Stomach (tissue), 19 donors: ENCODE measurements at regions of chrX and their contacts with region 1.

Region 1: GRCh38 chrX:1468250-1468772 is 15.6 kb upstream of the ASMTL start:
- DNase-seq: peak; percentile 40 to 50
- H3K4me3 ChIP-seq: no peak overlapping the region
- H3K27ac ChIP-seq: peak overlapping the region in 1 of 5 donors; percentile 62
- H3K4me1 ChIP-seq: peaks cover 0 to 32% (median 6%) of the 10 kb centered on the region in 4 donors
- H3K27me3 ChIP-seq: peaks cover 0 to 74% (median 13%) of the 10 kb centered on the region in 3 donors
- CTCF ChIP-seq: no peak
- EP300 ChIP-seq: no peak
- POLR2A ChIP-seq: no peak

Region 2: DNA sequence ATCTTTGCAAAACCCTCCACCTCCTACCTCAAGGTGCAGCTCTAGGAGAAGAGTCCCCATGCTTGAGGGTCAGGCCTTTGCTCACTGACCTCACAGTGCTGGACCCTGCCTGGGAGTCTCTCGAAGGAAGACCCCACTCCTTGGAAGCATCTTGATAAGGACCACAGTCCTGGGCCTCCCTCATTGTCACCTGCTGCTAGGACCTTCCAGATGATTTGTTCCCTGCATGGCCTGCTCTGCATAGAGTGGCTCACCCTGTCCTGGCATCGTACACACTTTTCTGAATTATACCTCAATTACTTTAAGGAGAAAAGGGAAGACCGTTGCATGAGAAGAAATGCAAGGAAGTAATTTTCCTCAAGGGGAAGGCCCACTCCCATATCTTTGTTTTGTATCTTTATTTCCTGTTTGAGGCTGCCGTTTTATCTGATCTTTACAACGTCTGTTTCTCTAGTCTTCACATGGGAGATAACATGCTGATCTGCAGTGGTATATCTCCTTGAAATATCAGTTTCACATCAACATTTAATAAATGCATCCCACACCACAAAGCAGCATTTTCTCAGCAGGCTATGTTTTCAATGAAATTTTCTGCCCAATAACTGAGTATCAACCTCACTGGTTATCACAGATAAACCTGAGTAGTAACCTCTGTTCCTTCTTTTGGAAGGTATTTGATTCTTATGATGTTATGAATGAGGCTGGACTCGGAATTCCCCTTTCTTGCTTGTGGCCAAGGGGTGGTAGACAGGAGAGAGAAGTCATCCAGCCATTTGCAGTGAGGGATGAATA is 108.1 kb after region 1 on chrX:
- intact Hi-C with region 1: loop called (anchors 10 kb)
- DNase-seq: peak in 1 of 2 donors; percentile 5
- H3K4me3 ChIP-seq: no peak overlapping the region
- H3K27ac ChIP-seq: no peak overlapping the region
- H3K4me1 ChIP-seq: no peaks in the 10 kb centered on the region
- H3K27me3 ChIP-seq: no peaks in the 10 kb centered on the region
- CTCF ChIP-seq: no peak
- EP300 ChIP-seq: no peak
- POLR2A ChIP-seq: no peak

Region 3: GRCh38 chrX:1784773-1785172 is 316.5 kb after region 1 on chrX:
- intact Hi-C with region 1: no loop called
- DNase-seq: no peak
- H3K4me3 ChIP-seq: no peak overlapping the region
- H3K27ac ChIP-seq: no peak overlapping the region
- H3K4me1 ChIP-seq: no peaks in the 10 kb centered on the region
- H3K27me3 ChIP-seq: no peaks in the 10 kb centered on the region
- CTCF ChIP-seq: no peak
- EP300 ChIP-seq: no peak
- POLR2A ChIP-seq: no peak